Left colon (tissue), 2 donors: ENCODE measurements at regions of chr13 and their contacts with region 1.

Region 1: GRCh38 chr13:75365724-75366173 is 116.2 kb downstream of the TBC1D4 start:
- DNase-seq: no peak
- ATAC-seq: peak; percentile 14

Region 2: GRCh38 chr13:75549262-75550158 is 183.8 kb after region 1 on chr13 and contains the start of gene UCHL3:
- intact Hi-C with region 1: loop called in 1 of 2 experiments (anchors 10 kb)
- DNase-seq: peak; percentile 95 to 99
- ATAC-seq: peak; percentile 92
- total RNA-seq, gene UCHL3: 40.8 to 43.6 TPM